CD14-positive monocyte (primary cell): ENCODE measurements at regions of chr6 and their contacts with region 1.

Region 1: DNA sequence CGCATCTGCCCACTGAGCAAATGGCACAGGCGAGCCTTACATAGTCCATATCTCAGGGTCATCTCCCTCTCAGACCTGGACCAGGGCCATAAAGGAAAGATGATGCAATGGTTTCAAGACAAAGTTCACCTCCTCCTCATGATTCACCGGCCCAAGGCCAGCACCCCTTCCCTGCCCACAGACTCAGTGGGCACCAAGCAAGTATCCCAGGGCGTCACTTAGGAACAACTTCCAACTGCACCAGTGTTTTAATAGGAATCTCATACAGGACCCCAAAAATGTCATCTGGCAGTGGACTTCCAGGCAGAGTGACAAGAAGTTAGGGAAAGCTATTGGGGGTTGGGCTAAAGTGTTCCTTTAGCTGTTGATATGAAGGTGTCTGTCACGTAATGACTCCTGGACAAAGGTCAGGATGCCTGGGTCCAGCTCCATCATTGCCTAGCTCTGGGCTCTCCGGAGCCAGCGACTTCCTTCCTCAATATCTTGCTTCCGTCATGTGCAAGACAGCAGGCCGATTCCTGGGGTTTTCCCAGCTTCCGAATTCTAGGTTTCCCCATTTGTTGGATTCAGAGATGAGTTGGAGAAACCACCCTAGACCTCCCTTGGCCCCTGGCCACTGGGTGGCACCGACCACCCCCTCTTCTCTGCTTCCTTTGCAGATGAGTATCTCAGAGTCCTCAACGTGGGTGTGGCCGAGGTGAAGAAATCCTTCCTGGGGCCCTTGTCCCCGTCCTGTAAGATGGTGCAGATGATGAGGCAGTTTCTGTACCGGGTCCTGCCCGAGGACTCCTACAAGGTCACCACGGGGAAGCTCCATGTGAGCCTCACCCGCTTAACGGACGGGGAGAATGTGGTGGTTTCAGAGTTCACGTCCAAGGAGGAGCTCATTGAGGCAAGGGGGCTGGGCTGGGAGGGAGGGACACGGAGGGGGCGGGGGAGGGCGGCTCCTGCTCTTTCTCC is 21.1 kb downstream of the PNPLA1 start:
- DNase-seq: peak; percentile 98 to 100 (median 99)
- H3K4me3 ChIP-seq: peak overlapping the region in 1 of 3 experiments; percentile 67
- H3K4me3 Mint-ChIP-seq: peak overlapping the region; percentile 70 to 79
- H3K27ac ChIP-seq: peak overlapping the region; percentile 97 to 98
- H3K27ac Mint-ChIP-seq: peak overlapping the region; percentile 97 to 100 (median 99)
- H3K4me1 ChIP-seq: peaks cover 48 to 61% of the 10 kb centered on the region in 2 donors
- H3K4me1 Mint-ChIP-seq: peaks cover 65% of the 10 kb centered on the region
- H3K27me3 ChIP-seq: no peaks in the 10 kb centered on the region
- H3K27me3 Mint-ChIP-seq: peaks cover 0 to 3% (median 2%) of the 10 kb centered on the region in 3 donors
- CTCF ChIP-seq: no peak

Region 2: GRCh38 chr6:36027501-36028087 is 263.3 kb before region 1 on chr6 and contains the start of gene MAPK14:
- intact Hi-C with region 1: loop called in 1 of 2 experiments (anchors 10 kb)
- DNase-seq: peak; percentile 99 to 100 (median 100)
- H3K4me3 ChIP-seq: peak within 1 kb of the TSS; percentile 87 to 99 (median 99)
- H3K4me3 Mint-ChIP-seq: peak within 1 kb of the TSS; percentile 92 to 98
- H3K27ac ChIP-seq: peak within 1 kb of the TSS; percentile 82 to 92
- H3K27ac Mint-ChIP-seq: peak within 1 kb of the TSS; percentile 90 to 98 (median 96)
- H3K4me1 ChIP-seq: peaks cover 50 to 57% of the 10 kb centered on the region in 2 donors
- H3K4me1 Mint-ChIP-seq: peaks cover 50% of the 10 kb centered on the region
- H3K27me3 ChIP-seq: no peaks in the 10 kb centered on the region
- H3K27me3 Mint-ChIP-seq: peaks cover 0 to 3% (median 2%) of the 10 kb centered on the region in 3 donors
- CTCF ChIP-seq: peak; percentile 86
- polyA plus RNA-seq, gene MAPK14: 56.6 to 96.6 (median 83.7) TPM

Region 3: DNA sequence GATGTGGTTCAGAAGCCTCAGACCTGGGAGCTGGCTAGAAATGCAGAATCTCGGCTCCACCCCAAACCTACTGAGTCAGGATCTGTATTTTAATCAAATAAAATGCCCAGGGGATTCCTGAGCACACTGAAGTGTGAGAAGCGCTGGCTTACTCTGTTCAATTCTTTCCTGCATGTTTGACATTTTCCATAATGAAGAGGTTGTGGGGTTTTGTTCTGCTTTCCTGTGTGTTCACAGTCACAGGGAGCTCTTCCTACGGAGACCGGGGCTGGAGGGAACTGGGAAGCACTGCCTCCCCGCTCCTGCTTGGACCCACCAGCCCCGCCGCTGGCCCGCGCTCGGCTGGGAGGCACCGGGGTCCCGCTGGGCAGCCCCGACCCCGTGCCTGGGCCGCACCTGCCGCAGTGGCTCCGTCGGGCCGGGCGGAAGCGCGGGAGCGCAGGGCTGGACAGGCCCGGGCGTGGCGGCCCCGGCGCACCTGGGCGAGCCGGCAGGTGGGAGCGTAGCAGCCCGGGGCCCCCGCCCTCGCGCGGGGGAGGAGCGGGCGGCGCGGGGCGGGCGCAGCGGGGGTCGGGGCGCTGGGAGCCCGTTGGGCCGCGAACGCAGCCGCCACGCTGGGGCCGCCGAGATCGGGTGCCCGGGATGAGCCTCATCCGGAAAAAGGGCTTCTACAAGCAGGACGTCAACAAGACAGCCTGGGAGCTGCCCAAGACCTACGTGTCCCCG is 160.8 kb before region 1 on chr6 and contains the start of gene MAPK13:
- intact Hi-C with region 1: loop called (anchors 2 to 5 kb)
- DNase-seq: peak in 2 of 3 donors; percentile 39 to 44
- H3K4me3 ChIP-seq: peak within 1 kb of the TSS; percentile 9 to 72 (median 30)
- H3K4me3 Mint-ChIP-seq: peak within 1 kb of the TSS; percentile 73 to 86
- H3K27ac ChIP-seq: peak within 1 kb of the TSS; percentile 4 to 27
- H3K27ac Mint-ChIP-seq: peak within 1 kb of the TSS in 6 of 7 donors; percentile 40 to 74 (median 66)
- H3K4me1 ChIP-seq: peaks cover 50 to 59% of the 10 kb centered on the region in 2 donors
- H3K4me1 Mint-ChIP-seq: peaks cover 64% of the 10 kb centered on the region
- H3K27me3 ChIP-seq: peaks cover 0 to 5% of the 10 kb centered on the region in 2 donors
- H3K27me3 Mint-ChIP-seq: peaks cover 14 to 19% (median 16%) of the 10 kb centered on the region in 3 donors
- CTCF ChIP-seq: no peak
- polyA plus RNA-seq, gene MAPK13: 0.88 to 9.8 (median 2.4) TPM

Region 4: DNA sequence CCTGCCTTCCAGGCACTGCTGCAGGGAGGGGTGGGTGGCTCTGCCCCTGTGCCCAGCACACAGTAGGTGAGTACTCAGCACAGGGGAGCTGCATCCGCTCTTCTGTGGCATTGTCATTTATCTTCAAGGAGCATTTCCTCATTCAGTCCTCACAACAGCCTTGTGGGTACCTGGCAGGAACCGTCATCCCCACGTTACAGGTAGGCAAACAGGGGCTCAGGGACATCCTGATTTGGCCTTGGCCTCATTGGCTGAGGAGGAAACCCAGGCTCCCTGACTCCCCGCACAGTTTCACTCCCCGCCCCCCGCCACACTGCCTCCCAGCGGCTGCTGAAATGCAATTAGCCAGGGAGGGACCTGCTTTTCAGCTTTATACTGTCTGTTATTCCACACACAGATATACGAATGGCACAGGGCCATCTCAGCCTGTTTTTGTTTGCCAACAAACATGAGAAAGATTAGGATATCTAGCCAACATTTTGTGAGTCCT is 45.3 kb before region 1 on chr6:
- intact Hi-C with region 1: loop called (anchors 5 kb)
- DNase-seq: peak in 2 of 3 donors; percentile 8 to 33
- H3K4me3 ChIP-seq: peak overlapping the region in 1 of 3 experiments; percentile 22
- H3K4me3 Mint-ChIP-seq: no peak overlapping the region
- H3K27ac ChIP-seq: peak overlapping the region; percentile 63 to 89
- H3K27ac Mint-ChIP-seq: peak overlapping the region; percentile 69 to 95 (median 92)
- H3K4me1 ChIP-seq: peaks cover 77 to 89% of the 10 kb centered on the region in 2 donors
- H3K4me1 Mint-ChIP-seq: peaks cover 88% of the 10 kb centered on the region
- H3K27me3 ChIP-seq: no peaks in the 10 kb centered on the region
- H3K27me3 Mint-ChIP-seq: peaks cover 0 to 10% (median 7%) of the 10 kb centered on the region in 3 donors
- CTCF ChIP-seq: peak; percentile 16